ENCODE measurements at regions of chr12 and their contacts with region 1.

Region 1: GRCh38 chr12:108826101-108826806 is 31.1 kb downstream of the SSH1 start:
- DNase-seq: no peak
- H3K4me3 Mint-ChIP-seq: peak overlapping the region; percentile 55
- H3K27ac Mint-ChIP-seq: peak overlapping the region; percentile 58
- H3K4me1 Mint-ChIP-seq: peaks cover 54% of the 10 kb centered on the region
- H3K27me3 Mint-ChIP-seq: no peaks in the 10 kb centered on the region

Region 2: GRCh38 chr12:108838194-108839017 is 12.2 kb after region 1 on chr12:
- intact Hi-C with region 1: loop called (anchors 2 kb)
- DNase-seq: peak; percentile 91
- H3K4me3 Mint-ChIP-seq: peak overlapping the region; percentile 74
- H3K27ac Mint-ChIP-seq: peak overlapping the region; percentile 95
- H3K4me1 Mint-ChIP-seq: peaks cover 47% of the 10 kb centered on the region
- H3K27me3 Mint-ChIP-seq: no peaks in the 10 kb centered on the region

Region 3: DNA sequence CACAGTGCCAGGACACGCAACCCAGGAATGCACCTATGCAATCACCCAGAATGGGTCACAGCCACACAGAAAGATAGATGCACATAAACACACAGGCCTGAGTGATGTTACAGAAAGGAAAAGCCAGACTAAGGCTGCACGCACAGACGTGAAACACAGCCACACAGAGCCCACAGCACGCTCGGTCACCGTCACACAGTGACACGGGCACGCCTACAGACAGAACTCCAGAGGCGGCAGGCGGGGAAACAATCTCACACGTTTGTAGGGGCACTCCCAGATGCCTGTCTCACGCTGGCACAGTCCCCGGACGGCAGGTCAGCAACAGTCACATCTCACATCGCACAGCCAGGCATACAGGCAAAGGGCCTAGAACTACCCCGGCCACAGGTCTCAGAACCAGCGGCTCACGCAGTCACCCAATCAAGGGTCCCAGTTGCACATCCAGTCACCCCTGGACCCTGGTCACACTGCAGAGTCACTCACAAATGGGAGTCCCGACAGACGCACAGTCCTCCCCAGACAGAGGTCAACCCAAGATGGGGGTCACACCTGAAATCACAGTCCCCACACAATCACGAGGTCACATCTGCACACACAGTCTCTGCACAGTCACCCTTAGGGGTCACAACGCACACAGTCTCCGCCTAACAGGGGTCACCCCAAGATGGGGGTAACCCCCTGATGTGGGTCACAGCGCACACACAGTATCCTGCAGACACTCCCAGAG is 30.3 kb after region 1 on chr12:
- intact Hi-C with region 1: loop called (anchors 5 kb)
- DNase-seq: peak; percentile 84
- H3K4me3 Mint-ChIP-seq: peak overlapping the region; percentile 91
- H3K27ac Mint-ChIP-seq: peak overlapping the region; percentile 84
- H3K4me1 Mint-ChIP-seq: peaks cover 43% of the 10 kb centered on the region
- H3K27me3 Mint-ChIP-seq: peaks cover 1% of the 10 kb centered on the region

Region 4: GRCh38 chr12:108950991-108951739 is 124.9 kb after region 1 on chr12:
- intact Hi-C with region 1: loop called (anchors 10 kb)
- DNase-seq: peak; percentile 90
- H3K4me3 Mint-ChIP-seq: no peak overlapping the region
- H3K27ac Mint-ChIP-seq: no peak overlapping the region
- H3K4me1 Mint-ChIP-seq: no peaks in the 10 kb centered on the region
- H3K27me3 Mint-ChIP-seq: peaks cover 14% of the 10 kb centered on the region

Region 5: DNA sequence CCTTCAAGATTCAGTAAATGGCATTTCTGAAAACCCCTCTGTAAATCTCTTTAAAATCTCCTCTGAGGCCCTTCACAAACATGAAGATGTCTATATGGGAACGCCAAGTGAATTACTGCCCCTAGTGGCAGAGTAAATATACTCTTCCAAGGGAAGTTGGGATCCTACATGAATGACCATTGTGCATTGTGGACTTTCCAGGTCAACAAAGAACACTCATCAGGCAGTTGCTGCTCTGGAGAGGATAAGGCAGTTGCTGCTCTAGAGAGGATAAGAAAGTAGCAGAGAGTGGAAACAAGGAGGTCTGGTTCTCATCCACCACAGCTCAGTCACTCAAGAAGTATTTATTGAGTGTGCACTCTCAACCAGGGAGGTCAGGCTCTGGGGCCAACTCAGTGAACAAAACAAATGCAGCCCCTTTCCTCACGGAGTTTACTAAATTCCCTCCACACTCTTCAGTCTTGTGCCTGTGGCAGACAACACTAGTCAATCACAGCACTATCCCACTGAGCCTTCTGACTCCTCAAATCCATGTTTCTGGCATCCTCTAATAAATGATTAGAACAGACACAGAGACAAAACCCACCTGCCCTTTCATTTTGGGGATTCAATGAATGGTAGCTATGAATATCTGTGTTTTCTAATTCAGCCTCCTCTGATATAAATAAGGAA is 141.8 kb after region 1 on chr12:
- intact Hi-C with region 1: no loop called
- DNase-seq: no peak
- H3K4me3 Mint-ChIP-seq: no peak overlapping the region
- H3K27ac Mint-ChIP-seq: no peak overlapping the region
- H3K4me1 Mint-ChIP-seq: no peaks in the 10 kb centered on the region
- H3K27me3 Mint-ChIP-seq: peaks cover 3% of the 10 kb centered on the region

Measured in activated CD4-positive, alpha-beta T cell treated with anti-CD3 and anti-CD28 coated beads, Interleukin-2, amount 10 ng/mL, durations not matched to agents 24 days and 14 days (primary cell).